Common myeloid progenitor, CD34-positive (primary cell): ENCODE measurements at regions of chr10 and their contacts with region 1.

Region 1: GRCh38 chr10:72273410-72274212 is at the start of gene DDIT4:
- DNase-seq: peak; percentile 98 to 100 (median 99)
- H3K4me3 ChIP-seq: peak within 1 kb of the TSS; percentile 74 to 97 (median 88)
- H3K27ac ChIP-seq: peak within 1 kb of the TSS; percentile 80 to 88
- H3K4me1 ChIP-seq: peaks cover 5 to 35% (median 29%) of the 10 kb centered on the region in 4 experiments
- H3K27me3 ChIP-seq: no peaks in the 10 kb centered on the region

Region 2: GRCh38 chr10:72254813-72255568 is 18.6 kb before region 1 on chr10:
- CTCF ChIA-PET with region 1: interaction called, 32 read pairs
- POLR2A ChIA-PET with region 1: interaction called, 17 read pairs
- DNase-seq: peak; percentile 55 to 75 (median 72)
- H3K4me3 ChIP-seq: peak overlapping the region in 5 of 7 experiments; percentile 6 to 62 (median 41)
- H3K27ac ChIP-seq: peak overlapping the region in 1 of 2 experiments; percentile 43
- H3K4me1 ChIP-seq: peaks cover 26 to 50% (median 37%) of the 10 kb centered on the region in 4 experiments
- H3K27me3 ChIP-seq: no peaks in the 10 kb centered on the region

Region 3: GRCh38 chr10:72260588-72261322 is 12.9 kb before region 1 on chr10:
- CTCF ChIA-PET with region 1: interaction called, 32 read pairs
- POLR2A ChIA-PET with region 1: interaction called, 17 read pairs
- DNase-seq: peak; percentile 80 to 93 (median 91)
- H3K4me3 ChIP-seq: peak overlapping the region; percentile 17 to 74 (median 59)
- H3K27ac ChIP-seq: peak overlapping the region in 1 of 2 experiments; percentile 87
- H3K4me1 ChIP-seq: peaks cover 27 to 52% (median 38%) of the 10 kb centered on the region in 4 experiments
- H3K27me3 ChIP-seq: no peaks in the 10 kb centered on the region

Region 4: GRCh38 chr10:72292223-72292691 is 18.6 kb after region 1 on chr10:
- CTCF ChIA-PET with region 1: interaction called, 17 read pairs
- POLR2A ChIA-PET with region 1: interaction called, 28 read pairs
- DNase-seq: no peak
- H3K4me3 ChIP-seq: no peak overlapping the region
- H3K27ac ChIP-seq: no peak overlapping the region
- H3K4me1 ChIP-seq: peaks cover 5 to 53% (median 20%) of the 10 kb centered on the region in 4 experiments
- H3K27me3 ChIP-seq: no peaks in the 10 kb centered on the region

Region 5: DNA sequence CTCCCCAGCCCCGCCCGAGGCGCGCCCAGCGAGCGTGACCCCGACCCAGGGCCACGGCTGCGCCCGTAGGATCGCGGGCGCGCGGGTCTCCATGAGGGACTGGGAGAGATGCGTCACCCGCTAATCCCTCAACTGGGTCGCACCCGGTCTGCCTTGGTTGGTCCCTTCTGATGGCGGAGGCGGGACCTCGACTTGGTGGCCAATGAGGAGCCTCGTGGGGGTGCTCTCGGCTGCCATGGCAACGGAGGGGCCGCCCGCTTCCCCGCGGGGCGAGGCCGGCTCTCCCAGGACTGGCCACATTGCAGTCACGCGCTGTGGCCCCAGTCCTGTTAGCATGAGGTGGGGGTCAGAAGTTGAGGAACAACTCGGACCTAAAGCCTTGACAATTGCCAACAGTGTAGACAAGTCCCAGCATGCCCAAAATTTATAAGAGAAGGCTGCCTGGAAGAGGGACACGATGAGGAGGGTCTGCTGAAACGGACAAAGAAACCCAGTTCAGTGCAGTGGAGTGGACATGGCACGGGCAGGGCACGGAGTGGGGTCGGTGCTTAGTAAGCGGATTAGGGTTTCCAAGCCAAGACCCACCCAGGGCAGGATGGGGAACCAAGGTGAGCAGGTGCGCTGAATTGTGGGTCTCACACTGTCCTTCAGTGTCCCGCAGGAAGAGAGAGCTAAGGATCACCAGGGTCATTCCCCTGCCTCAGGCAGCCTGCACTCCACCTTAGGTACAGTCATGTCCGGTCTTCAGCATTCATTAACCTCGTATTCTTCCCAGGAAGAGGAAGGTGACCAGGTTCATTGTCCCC is 24.6 kb after region 1 on chr10:
- CTCF ChIA-PET with region 1: interaction called, 17 read pairs
- POLR2A ChIA-PET with region 1: interaction called, 28 read pairs
- DNase-seq: peak; percentile 94 to 97 (median 97)
- H3K4me3 ChIP-seq: peak overlapping the region in 6 of 7 experiments; percentile 13 to 72 (median 56)
- H3K27ac ChIP-seq: peak overlapping the region; percentile 40 to 87
- H3K4me1 ChIP-seq: peaks cover 5 to 46% (median 30%) of the 10 kb centered on the region in 4 experiments
- H3K27me3 ChIP-seq: no peaks in the 10 kb centered on the region

Region 6: GRCh38 chr10:72319416-72320254 is 46.0 kb after region 1 on chr10:
- CTCF ChIA-PET with region 1: interaction called, 51 read pairs
- POLR2A ChIA-PET with region 1: interaction called, 13 read pairs
- DNase-seq: peak; percentile 88 to 94 (median 93)
- H3K4me3 ChIP-seq: peak overlapping the region in 5 of 7 experiments; percentile 40 to 71 (median 50)
- H3K27ac ChIP-seq: peak overlapping the region; percentile 78 to 94
- H3K4me1 ChIP-seq: peaks cover 22 to 94% (median 92%) of the 10 kb centered on the region in 4 experiments
- H3K27me3 ChIP-seq: no peaks in the 10 kb centered on the region

Region 7: DNA sequence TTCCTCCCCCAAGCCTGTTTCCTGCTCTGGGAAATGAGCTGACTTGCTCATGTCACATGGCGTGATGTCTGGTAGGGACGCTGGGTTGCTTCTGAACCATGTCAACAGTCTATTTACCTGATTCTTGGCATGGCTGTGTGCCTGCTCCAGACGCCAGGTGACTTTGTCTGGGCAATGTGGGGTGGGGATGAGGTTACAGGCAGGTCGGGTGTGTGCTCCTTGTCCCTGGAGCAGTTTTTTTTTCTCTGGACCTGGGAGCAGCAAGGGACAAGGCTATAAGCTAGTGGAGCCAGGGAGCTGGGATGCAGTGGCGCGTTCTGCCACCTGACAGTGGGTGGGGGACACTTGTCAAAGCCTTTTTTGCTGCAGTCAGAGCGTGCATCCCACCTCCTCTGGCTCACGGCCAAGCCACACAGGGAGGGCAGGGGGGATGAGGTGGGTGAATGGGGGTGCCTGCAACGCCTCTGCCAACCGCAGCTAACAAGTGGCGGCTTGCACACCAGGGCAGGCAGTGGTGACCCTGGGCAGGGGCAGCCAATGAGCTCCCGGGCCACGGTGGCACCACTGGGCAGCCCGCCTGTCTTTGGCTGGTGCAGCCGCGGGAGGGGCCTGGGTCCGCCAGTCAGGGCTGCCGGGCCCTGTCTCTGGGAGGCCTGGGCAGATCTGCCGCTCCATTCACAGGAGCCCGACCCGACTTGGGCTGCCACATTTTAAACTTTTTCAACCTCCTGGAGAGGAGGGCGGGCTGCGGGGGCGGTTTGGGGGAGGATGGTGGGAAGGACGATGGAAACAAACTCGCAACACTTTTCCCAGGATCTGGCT is 58.2 kb after region 1 on chr10:
- CTCF ChIA-PET with region 1: interaction called, 58 read pairs
- POLR2A ChIA-PET with region 1: interaction called, 30 read pairs
- DNase-seq: peak; percentile 97 to 100 (median 99)
- H3K4me3 ChIP-seq: peak overlapping the region in 4 of 7 experiments; percentile 5 to 56 (median 51)
- H3K27ac ChIP-seq: peak overlapping the region; percentile 75 to 86
- H3K4me1 ChIP-seq: peaks cover 22 to 96% (median 93%) of the 10 kb centered on the region in 4 experiments
- H3K27me3 ChIP-seq: no peaks in the 10 kb centered on the region